ENCODE measurements at regions of chr4 and their contacts with region 1.

Region 1: GRCh38 chr4:25144870-25145481 is 15.3 kb downstream of the SEPSECS start:
- DNase-seq: no peak
- ATAC-seq: peak; percentile 38

Region 2: GRCh38 chr4:24979554-24979953 is 165.4 kb before region 1 on chr4:
- intact Hi-C with region 1: loop called (anchors 5 kb)
- DNase-seq: no peak
- ATAC-seq: peak; percentile 86

Region 3: GRCh38 chr4:25030277-25031076 is 114.5 kb before region 1 on chr4 and contains the start of gene LGI2:
- intact Hi-C with region 1: loop called (anchors 2 kb)
- DNase-seq: peak; percentile 68
- ATAC-seq: peak; percentile 83
- total RNA-seq, gene LGI2: 2.3 TPM